ENCODE measurements at regions of chr7 and their contacts with region 1.

Region 1: GRCh38 chr7:48366096-48366495 is 194.8 kb downstream of the ABCA13 start:
- DNase-seq: peak; percentile 78
- ATAC-seq: peak; percentile 74
- H3K4me3 ChIP-seq: peak overlapping the region; percentile 26; the same call in 1 of the 2 replicates
- H3K27ac ChIP-seq: peak overlapping the region; percentile 83
- H3K4me1 ChIP-seq: peaks cover 41% of the 10 kb centered on the region
- H3K27me3 ChIP-seq: no peaks in the 10 kb centered on the region
- CTCF ChIP-seq: no peak

Region 2: DNA sequence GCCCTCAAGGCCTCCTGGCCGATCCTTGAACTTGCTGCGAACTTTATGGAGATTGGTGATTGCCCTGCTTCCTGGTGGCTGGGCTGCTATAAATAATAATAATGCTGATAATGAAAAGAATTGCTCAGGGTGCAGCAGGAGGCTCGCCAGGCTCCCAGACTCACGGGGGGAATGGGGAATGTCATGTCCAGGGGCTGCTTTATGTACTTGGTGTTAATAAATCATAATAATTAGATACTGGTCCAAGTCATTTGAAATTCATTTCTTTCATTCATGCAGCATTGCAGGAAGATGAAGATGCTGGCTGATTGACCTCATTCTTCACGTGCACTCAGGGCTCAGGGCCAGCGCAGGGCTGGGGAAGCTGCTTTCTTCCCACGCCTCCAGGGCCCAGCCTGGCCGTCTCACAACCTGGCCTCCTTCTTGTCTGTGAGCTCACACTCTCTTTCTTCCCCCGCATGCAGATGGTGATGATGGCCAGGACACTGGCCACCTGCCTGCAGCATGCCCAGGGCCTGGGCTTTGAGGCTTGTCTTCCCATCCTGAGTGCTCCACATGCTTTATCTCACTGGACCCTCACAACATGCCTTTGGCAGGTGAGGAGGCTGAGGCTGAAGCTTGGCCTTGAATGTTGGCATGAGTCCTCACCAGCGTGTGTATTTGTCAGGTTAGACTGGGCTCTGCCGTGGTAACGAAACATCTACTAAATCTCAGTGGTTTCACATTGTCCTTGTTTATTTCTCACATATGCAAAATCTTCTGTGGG is 645.8 kb before region 1 on chr7:
- CTCF ChIA-PET with region 1: no interaction called
- POLR2A ChIA-PET with region 1: no interaction called
- intact Hi-C with region 1: no loop called
- DNase-seq: no peak
- ATAC-seq: no peak
- H3K4me3 ChIP-seq: no peak overlapping the region
- H3K27ac ChIP-seq: no peak overlapping the region
- H3K4me1 ChIP-seq: peaks cover 13% of the 10 kb centered on the region
- H3K27me3 ChIP-seq: no peaks in the 10 kb centered on the region
- CTCF ChIP-seq: no peak

Region 3: DNA sequence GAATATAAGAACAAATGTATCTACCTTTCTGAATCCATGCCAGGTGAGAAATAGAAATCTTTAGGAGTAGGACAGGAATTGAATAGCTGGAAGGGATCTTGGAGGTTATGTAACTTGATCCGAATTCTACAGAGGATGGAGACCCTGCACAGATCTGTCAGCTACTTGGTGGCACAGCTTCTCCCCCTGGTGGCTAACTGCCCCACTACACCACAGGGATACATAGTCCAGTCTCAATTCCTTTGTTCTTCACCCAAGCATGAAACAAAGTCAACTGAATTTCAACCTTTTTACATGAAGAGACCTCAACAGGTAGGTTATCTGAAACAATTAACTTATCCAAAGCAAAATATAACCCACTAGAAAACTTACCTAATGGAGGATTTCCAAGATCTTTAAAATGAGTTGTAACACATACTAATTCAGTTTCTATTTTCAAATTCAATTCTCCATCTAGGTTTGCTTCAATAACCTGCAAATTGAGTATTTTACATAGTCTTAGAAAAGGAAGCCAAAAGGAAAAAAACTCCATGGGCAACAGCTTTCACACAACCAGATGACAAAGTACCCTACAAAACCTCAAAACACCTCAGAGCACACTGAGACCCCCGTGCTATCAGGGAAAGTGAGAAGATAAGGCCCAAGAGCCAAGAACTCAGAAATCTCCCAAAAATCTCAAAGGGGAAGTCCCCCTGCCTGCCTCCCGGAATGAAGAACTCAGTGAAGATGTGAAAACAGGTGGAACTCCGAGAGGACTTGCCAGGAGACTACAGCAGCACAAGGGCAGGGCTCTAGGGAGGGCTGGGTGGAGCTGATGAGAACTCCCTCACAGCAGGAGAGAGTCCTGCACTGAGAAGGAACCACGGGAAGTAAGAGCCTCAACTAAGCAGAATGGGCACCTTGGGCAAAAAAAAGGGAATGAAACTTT is 397.0 kb before region 1 on chr7:
- CTCF ChIA-PET with region 1: no interaction called
- POLR2A ChIA-PET with region 1: no interaction called
- intact Hi-C with region 1: no loop called
- DNase-seq: peak; percentile 69
- ATAC-seq: peak; percentile 95
- H3K4me3 ChIP-seq: no peak overlapping the region
- H3K27ac ChIP-seq: no peak overlapping the region
- H3K4me1 ChIP-seq: peaks cover 5% of the 10 kb centered on the region; the same call in 1 of the 2 replicates
- H3K27me3 ChIP-seq: no peaks in the 10 kb centered on the region
- CTCF ChIP-seq: peak; percentile 91

Region 4: DNA sequence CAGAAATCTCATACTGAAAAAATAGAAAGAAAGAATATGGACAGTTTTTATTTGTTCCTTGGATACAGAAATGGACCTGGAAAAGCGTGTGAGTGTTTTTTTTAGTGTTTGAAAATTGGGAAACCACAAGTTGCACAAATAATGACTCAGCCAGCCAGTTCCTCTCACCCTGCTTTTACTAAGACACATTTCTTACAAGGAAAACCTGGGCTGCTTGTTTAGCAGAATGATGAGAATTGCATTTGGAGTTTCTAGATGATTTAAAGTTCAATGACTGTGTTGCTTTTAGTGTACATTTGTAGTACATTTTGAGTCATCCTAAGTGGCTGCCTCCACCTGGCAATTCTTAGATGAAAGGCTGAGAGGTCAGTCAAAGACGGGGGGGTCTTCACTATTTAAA is 23.9 kb after region 1 on chr7:
- CTCF ChIA-PET with region 1: no interaction called
- POLR2A ChIA-PET with region 1: no interaction called
- intact Hi-C with region 1: loop called (anchors 1 kb)
- DNase-seq: peak; percentile 91
- ATAC-seq: peak; percentile 93
- H3K4me3 ChIP-seq: peak overlapping the region; percentile 29; the same call in 1 of the 2 replicates
- H3K27ac ChIP-seq: peak overlapping the region; percentile 95
- H3K4me1 ChIP-seq: peaks cover 24% of the 10 kb centered on the region
- H3K27me3 ChIP-seq: no peaks in the 10 kb centered on the region
- CTCF ChIP-seq: no peak